H1 (cell line): ENCODE measurements at regions of chr9 and their contacts with region 1.

Region 1: DNA sequence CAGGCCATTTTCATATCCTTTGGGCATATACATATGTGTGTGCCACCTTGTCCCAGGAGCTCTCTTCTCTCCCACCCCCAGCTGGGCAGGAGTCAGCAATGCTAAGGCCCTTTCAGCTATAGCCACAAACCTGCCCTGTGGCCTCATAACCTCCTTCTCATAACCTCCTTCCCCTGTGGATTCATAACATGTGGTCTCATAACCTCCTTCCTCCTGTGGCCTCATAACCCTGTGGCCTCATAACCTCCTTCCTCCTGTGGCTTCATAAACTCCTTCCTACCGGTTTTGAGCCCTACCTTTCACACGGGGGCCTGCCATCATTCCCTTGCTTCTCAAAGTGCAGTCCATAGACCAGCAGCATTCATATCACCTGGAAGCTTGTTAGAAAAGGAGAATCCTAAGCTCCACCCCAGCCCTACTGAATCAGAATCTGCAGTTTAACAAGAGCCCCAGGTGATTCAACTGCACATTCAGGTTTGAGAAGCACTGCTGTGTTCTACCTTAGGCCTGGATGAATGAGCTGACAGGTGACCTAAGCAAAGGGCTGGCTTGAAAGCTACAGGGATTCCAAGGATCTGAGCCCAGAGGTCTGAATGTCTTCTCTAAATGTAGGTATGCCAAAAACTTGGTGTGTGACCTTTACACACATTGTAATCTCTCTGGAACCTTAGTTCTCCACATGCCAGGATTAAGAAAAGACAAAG is 41.9 kb upstream of the PLPP6 start:
- DNase-seq: no peak
- H3K4me3 ChIP-seq: no peak overlapping the region
- H3K27ac ChIP-seq: no peak overlapping the region
- H3K4me1 ChIP-seq: peaks cover 6 to 18% (median 8%) of the 10 kb centered on the region in 4 experiments
- H3K27me3 ChIP-seq: no peaks in the 10 kb centered on the region
- CTCF ChIP-seq: no peak
- EP300 ChIP-seq: no peak
- POLR2A ChIP-seq: no peak
- RAD21 ChIP-seq: no peak

Region 2: DNA sequence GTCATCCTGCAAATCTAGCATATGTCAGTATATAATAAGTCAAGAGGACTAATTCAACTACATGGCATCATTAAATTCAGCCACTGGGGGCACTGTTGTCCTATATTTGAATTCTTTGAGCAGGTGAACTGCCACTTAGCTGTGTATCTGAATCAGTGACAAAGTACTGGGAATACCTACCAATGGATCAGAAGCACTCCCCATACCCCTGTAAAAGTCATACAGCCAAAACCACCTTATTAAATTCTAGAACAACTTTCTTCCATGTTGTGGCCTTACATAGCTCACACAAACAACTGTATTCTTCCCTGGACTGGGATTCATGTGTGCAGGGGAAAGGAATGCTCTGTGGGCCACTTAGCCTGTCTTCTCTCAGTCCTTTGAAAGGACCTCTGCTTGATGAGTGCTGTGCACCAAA is 15.5 kb before region 1 on chr9:
- CTCF ChIA-PET with region 1: interaction called, 37 read pairs
- POLR2A ChIA-PET with region 1: interaction called, 3 read pairs
- DNase-seq: peak; percentile 43 to 81
- H3K4me3 ChIP-seq: no peak overlapping the region
- H3K27ac ChIP-seq: no peak overlapping the region
- H3K4me1 ChIP-seq: peaks cover 0 to 3% (median 0%) of the 10 kb centered on the region in 4 experiments; a peak in 2 of 7 replicates
- H3K27me3 ChIP-seq: no peaks in the 10 kb centered on the region
- CTCF ChIP-seq: peak in 2 of 3 experiments; percentile 64 to 75; a peak in 3 of 4 replicates
- EP300 ChIP-seq: no peak
- POLR2A ChIP-seq: no peak
- RAD21 ChIP-seq: peak; percentile 79 to 87

Region 3: GRCh38 chr9:4630836-4631235 is 10.6 kb after region 1 on chr9:
- CTCF ChIA-PET with region 1: no interaction called
- POLR2A ChIA-PET with region 1: no interaction called
- DNase-seq: no peak
- H3K4me3 ChIP-seq: no peak overlapping the region
- H3K27ac ChIP-seq: no peak overlapping the region
- H3K4me1 ChIP-seq: peaks cover 0 to 8% (median 0%) of the 10 kb centered on the region in 4 experiments; a peak in 3 of 7 replicates
- H3K27me3 ChIP-seq: no peaks in the 10 kb centered on the region
- CTCF ChIP-seq: no peak
- EP300 ChIP-seq: no peak
- POLR2A ChIP-seq: no peak
- RAD21 ChIP-seq: no peak

Region 4: GRCh38 chr9:4671737-4672136 is 51.5 kb after region 1 on chr9:
- CTCF ChIA-PET with region 1: no interaction called
- POLR2A ChIA-PET with region 1: no interaction called
- DNase-seq: no peak
- H3K4me3 ChIP-seq: no peak overlapping the region
- H3K27ac ChIP-seq: no peak overlapping the region
- H3K4me1 ChIP-seq: peaks cover 0 to 6% (median 0%) of the 10 kb centered on the region in 4 experiments; a peak in 2 of 7 replicates
- H3K27me3 ChIP-seq: no peaks in the 10 kb centered on the region
- CTCF ChIP-seq: no peak
- EP300 ChIP-seq: no peak
- POLR2A ChIP-seq: no peak
- RAD21 ChIP-seq: no peak